Psoas muscle (tissue), 8 donors: ENCODE measurements at regions of chr7 and their contacts with region 1.

Region 1: GRCh38 chr7:136039577-136040345 is 62.6 kb upstream of the MTPN start:
- DNase-seq: no peak
- ATAC-seq: no peak
- H3K4me3 ChIP-seq: no peak overlapping the region
- H3K27ac ChIP-seq: no peak overlapping the region
- H3K4me1 ChIP-seq: peaks cover 4% of the 10 kb centered on the region
- H3K27me3 ChIP-seq: no peaks in the 10 kb centered on the region
- CTCF ChIP-seq: no peak

Region 2: GRCh38 chr7:136016649-136017395 is 22.9 kb before region 1 on chr7:
- intact Hi-C with region 1: loop called in 1 of 2 experiments (anchors 1 kb)
- DNase-seq: no peak
- ATAC-seq: no peak
- H3K4me3 ChIP-seq: no peak overlapping the region
- H3K27ac ChIP-seq: no peak overlapping the region
- H3K4me1 ChIP-seq: no peaks in the 10 kb centered on the region
- H3K27me3 ChIP-seq: no peaks in the 10 kb centered on the region
- CTCF ChIP-seq: no peak